Ascending aorta (tissue), 2 donors: ENCODE measurements at regions of chr9 and their contacts with region 1.

Region 1: DNA sequence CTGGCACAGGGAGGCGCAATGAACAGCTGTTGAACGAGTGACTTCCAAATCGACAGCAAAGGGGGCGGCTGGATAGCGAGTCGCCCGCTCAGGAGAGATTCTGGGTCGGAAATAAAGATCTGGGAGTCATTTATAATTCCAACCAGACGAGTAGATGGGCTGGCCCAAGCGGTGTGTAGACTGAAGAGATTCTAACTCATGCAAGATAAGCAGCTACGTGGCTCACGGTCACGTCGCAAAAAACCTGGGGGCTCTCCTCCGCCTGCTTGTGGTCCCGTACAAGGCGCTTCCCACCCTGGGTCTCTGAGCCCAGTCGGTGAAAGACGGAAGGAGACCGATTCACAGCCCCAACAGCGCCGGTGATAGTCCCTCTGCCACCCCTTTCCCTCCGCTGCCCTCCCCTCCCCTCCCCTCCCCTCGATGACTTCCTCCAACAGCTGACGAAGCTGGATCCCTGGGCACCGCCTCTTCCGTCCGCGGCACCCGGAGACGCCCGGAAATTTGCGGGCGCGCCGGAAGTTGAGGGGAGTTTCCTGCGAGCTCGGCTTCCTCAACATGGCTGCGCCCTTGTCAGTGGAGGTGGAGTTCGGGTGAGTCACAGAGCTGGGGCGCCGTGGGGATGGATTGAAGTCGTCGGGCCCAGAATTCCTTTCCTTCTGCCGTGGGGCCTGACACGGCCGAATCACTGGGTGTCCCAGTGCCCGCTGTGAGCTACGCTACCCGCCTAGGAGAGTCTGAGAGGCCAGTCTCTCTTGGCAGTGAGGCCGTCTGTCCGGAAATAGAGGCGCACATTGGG is at the start of gene URM1:
- DNase-seq: peak; percentile 80 to 98
- H3K4me3 ChIP-seq: peak within 1 kb of the TSS; percentile 66 to 80
- H3K27ac ChIP-seq: peak within 1 kb of the TSS; percentile 84 to 87
- H3K4me1 ChIP-seq: peaks cover 0 to 8% of the 10 kb centered on the region in 2 donors
- H3K27me3 ChIP-seq: no peaks in the 10 kb centered on the region
- CTCF ChIP-seq: no peak
- total RNA-seq, gene URM1: 37.5 TPM

Region 2: GRCh38 chr9:128275996-128276573 is 94.9 kb before region 1 on chr9 and contains the starts of genes GOLGA2 and SWI5:
- intact Hi-C with region 1: loop called (anchors 2 kb)
- DNase-seq: peak; percentile 95 to 100
- H3K4me3 ChIP-seq: peak within 1 kb of the TSS; percentile 78 to 91
- H3K27ac ChIP-seq: peak within 1 kb of the TSS; percentile 86 to 87
- H3K4me1 ChIP-seq: peaks cover 6 to 20% of the 10 kb centered on the region in 2 donors
- H3K27me3 ChIP-seq: no peaks in the 10 kb centered on the region
- CTCF ChIP-seq: no peak
- total RNA-seq, gene GOLGA2: 74.9 TPM
- total RNA-seq, gene SWI5: 1.8 TPM

Region 3: DNA sequence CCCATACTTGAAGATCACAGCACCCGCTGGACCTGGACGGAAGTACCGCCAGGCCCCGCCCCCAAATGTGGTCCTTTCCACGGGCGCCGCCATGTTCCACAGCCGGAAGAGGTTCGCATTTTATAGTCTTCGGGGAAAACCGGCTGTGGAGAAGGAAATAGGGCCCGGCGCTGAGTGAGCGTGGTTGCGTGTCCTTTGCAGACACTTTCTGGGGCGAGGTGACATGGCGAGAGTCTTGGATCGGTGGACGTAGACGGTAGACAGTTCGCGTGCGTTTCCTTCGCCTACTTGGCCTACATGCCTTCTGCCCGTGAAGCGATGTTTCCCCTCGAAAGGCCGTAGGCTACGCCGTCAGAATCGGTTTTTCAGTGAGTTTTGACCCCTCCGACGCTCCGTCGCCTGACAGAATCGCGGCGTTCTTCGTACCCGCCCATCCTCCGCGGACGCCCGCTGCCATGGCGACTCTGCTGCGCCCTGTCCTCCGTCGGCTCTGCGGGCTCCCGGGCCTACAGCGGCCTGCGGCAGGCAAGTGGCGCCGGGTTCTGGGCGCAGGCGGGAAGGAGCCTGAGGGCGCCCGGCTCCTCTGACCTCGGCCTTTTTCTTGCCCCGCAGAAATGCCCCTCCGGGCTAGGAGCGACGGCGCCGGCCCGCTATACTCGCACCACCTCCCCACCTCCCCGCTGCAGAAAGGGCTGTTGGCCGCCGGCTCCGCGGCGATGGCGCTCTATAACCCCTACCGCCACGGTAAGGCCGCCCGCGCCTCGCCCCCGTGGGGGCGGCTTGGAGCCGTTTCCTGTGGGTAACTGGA is 48.4 kb before region 1 on chr9 and contains the starts of genes COQ4 and TRUB2:
- intact Hi-C with region 1: loop called (anchors 2 kb)
- DNase-seq: peak; percentile 72 to 97
- H3K4me3 ChIP-seq: peak within 1 kb of the TSS; percentile 72 to 76
- H3K27ac ChIP-seq: peak within 1 kb of the TSS; percentile 82 to 85
- H3K4me1 ChIP-seq: peaks cover 11 to 17% of the 10 kb centered on the region in 2 donors
- H3K27me3 ChIP-seq: no peaks in the 10 kb centered on the region
- CTCF ChIP-seq: no peak
- total RNA-seq, gene COQ4: 11.4 TPM
- total RNA-seq, gene TRUB2: 10.2 TPM

Region 4: GRCh38 chr9:128333451-128333869 is 37.6 kb before region 1 on chr9:
- intact Hi-C with region 1: no loop called
- DNase-seq: no peak
- H3K4me3 ChIP-seq: no peak overlapping the region
- H3K27ac ChIP-seq: no peak overlapping the region
- H3K4me1 ChIP-seq: no peaks in the 10 kb centered on the region
- H3K27me3 ChIP-seq: no peaks in the 10 kb centered on the region
- CTCF ChIP-seq: no peak

Region 5: GRCh38 chr9:128420060-128420650 is 49.1 kb after region 1 on chr9:
- intact Hi-C with region 1: loop called (anchors 2 kb)
- DNase-seq: peak in 1 of 2 donors; percentile 85
- H3K4me3 ChIP-seq: peak overlapping the region; percentile 89 to 93
- H3K27ac ChIP-seq: peak overlapping the region; percentile 82
- H3K4me1 ChIP-seq: peaks cover 0 to 17% of the 10 kb centered on the region in 2 donors
- H3K27me3 ChIP-seq: no peaks in the 10 kb centered on the region
- CTCF ChIP-seq: peak; percentile 81 to 90 (median 84)

Region 6: DNA sequence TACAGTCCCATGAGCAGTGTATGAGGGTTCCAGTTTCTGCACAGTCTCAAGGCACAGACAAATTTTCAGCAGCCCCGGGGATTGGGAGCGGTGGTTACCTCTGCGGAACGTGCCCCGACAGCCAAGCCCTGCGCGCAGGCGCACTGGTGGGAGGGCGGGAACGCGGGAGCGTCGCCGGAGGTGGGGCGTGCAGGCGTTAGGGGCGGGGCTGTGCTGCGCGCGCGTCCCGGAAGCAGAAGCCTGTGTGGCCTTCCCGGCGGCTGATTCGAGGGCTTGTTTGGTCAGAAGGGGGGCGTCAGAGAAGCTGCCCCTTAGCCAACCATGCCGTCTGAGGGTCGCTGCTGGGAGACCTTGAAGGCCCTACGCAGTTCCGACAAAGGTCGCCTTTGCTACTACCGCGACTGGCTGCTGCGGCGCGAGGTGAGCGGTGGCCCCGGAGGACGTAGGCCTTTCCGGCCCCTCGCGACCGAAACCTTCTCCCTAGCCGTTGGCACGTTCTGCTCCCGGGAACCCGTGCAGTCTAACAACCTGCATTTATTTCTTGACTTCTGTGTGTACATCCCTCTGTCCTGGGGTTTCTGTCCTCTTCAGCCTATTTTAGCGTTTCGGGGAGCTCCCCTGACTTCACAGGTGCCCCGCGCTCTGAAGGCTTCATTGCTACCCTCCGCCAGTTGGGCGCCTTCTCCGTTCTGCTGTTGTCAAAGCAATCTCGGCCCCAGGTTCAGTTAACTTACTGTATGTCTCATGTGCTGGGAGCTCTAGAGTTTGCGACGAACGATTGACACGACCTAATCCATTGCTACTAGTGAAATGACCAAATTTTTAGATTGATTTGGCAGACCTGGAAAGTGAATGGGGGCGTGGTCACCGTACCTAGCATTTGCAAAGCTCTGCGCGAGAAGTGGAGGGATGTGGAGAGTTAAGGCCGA is 133.7 kb after region 1 on chr9 and contains the start of gene GLE1:
- intact Hi-C with region 1: loop called (anchors 5 kb)
- DNase-seq: peak; percentile 62 to 97
- H3K4me3 ChIP-seq: peak within 1 kb of the TSS; percentile 82 to 90
- H3K27ac ChIP-seq: peak within 1 kb of the TSS; percentile 66 to 82
- H3K4me1 ChIP-seq: peaks cover 3 to 23% of the 10 kb centered on the region in 2 donors
- H3K27me3 ChIP-seq: no peaks in the 10 kb centered on the region
- CTCF ChIP-seq: no peak
- total RNA-seq, gene GLE1: 6.3 TPM

Region 7: DNA sequence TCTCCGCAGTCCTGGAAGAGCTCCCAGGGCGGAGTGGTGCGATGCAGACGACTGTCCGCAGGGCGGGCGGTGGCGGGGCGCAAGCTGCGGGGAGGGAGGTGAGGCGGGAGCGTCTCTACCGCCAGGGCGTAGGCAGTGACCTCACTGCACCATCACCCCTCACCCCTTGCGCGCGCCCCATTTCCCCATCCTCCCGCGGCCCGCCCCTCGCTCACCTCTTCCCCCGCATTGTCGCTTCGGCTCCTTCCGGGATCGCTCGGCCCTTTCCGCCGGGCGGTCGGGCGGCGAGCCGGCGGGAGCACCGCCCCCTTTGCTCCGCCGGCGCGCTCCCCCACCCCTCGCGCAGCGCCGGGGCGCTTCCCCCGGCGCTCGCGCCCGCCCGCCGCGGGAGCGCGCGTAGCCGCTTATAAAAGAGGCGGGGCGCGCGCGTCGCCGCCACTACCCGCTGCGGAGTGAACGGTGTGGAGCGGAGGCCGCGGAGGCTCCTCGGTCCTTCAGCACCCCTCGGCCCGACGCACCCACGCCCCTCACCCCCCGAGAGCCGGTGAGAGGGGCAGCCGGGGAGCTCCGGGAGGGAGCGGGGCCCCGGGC is 181.2 kb after region 1 on chr9 and contains the start of gene SPTAN1:
- intact Hi-C with region 1: loop called (anchors 5 kb)
- DNase-seq: peak; percentile 64 to 93
- H3K4me3 ChIP-seq: peak within 1 kb of the TSS; percentile 94 to 96
- H3K27ac ChIP-seq: peak within 1 kb of the TSS; percentile 96 to 98
- H3K4me1 ChIP-seq: peaks cover 5 to 43% of the 10 kb centered on the region in 2 donors
- H3K27me3 ChIP-seq: no peaks in the 10 kb centered on the region
- CTCF ChIP-seq: peak in 2 of 3 experiments; percentile 6 to 7
- total RNA-seq, gene SPTAN1: 687 TPM